HCT116 (cell line): ENCODE measurements at regions of chr6 and their contacts with region 1.

Region 1: DNA sequence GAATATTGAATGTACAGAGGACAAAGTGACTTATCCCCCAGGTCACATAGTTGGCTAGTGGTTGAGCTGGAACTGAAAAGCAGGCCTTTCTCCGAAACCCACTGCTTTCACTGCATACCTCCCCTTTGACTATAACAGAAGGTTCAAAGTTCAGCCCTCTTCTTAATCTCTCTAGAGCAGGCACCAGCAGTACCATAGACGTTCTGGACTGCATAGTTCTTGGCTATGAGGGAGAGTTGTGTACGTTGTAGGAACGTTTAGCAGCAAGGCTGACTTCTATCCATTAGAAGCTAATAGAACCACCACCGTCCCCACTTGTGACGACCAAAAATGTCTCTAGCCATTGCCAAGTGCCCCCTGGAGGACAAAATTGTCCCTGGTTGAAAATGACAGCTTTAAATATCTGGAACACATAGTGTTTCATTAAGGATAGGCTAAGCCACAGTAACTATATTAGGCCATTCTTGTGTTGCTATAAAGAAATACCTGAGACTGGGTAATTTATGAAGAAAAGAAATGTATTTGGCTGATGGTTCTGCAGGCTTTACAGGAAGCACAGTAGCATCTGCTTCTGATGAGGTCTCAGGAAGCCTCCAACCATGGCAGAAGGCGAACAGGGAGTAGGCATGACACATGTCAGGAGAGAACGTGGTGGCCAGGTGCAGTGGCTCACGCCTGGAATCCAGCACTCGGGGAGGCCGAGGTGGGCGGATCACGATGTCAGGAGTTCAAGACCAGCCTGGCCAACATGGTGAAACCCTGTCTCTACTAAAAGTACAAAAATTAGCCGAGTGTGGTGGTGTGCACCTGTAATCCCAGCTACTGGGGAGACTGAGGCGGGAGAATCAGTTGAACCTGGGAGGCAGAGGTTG is 123.6 kb upstream of the MTHFD1L start:
- DNase-seq: peak; percentile 23
- ATAC-seq: peak; percentile 73
- H3K4me3 ChIP-seq: no peak overlapping the region
- H3K27ac ChIP-seq: no peak overlapping the region
- H3K4me1 ChIP-seq: no peaks in the 10 kb centered on the region
- H3K27me3 ChIP-seq: no peaks in the 10 kb centered on the region
- CTCF ChIP-seq: peak; percentile 58 to 70 (median 66)
- POLR2A ChIP-seq: no peak
- RAD21 ChIP-seq: peak; percentile 75

Region 2: GRCh38 chr6:150417899-150418826 is 323.7 kb before region 1 on chr6:
- CTCF ChIA-PET with region 1: interaction called, 18 read pairs
- POLR2A ChIA-PET with region 1: interaction called, 3 read pairs
- RAD21 ChIA-PET with region 1: interaction called in 1 of 2 experiments, 4 read pairs
- intact Hi-C with region 1: loop called (anchors 1 kb)
- DNase-seq: peak; percentile 88
- ATAC-seq: peak; percentile 83
- H3K4me3 ChIP-seq: peak overlapping the region; percentile 13 to 50
- H3K27ac ChIP-seq: peak overlapping the region; percentile 40; the same call in 1 of the 2 replicates
- H3K4me1 ChIP-seq: peaks cover 13 to 20% of the 10 kb centered on the region in 2 experiments
- H3K27me3 ChIP-seq: no peaks in the 10 kb centered on the region
- CTCF ChIP-seq: peak; percentile 80 to 88 (median 83)
- POLR2A ChIP-seq: no peak
- RAD21 ChIP-seq: peak; percentile 96

Region 3: GRCh38 chr6:150685860-150686259 is 56.0 kb before region 1 on chr6:
- CTCF ChIA-PET with region 1: interaction called, 10 read pairs
- POLR2A ChIA-PET with region 1: no interaction called
- RAD21 ChIA-PET with region 1: no interaction called
- intact Hi-C with region 1: no loop called
- DNase-seq: peak; percentile 39
- ATAC-seq: peak; percentile 99
- H3K4me3 ChIP-seq: no peak overlapping the region
- H3K27ac ChIP-seq: no peak overlapping the region
- H3K4me1 ChIP-seq: peaks cover 0 to 10% of the 10 kb centered on the region in 2 experiments; a peak in 2 of 4 replicates
- H3K27me3 ChIP-seq: no peaks in the 10 kb centered on the region
- CTCF ChIP-seq: peak; percentile 64 to 95 (median 90); a peak in 5 of 6 replicates
- POLR2A ChIP-seq: no peak
- RAD21 ChIP-seq: peak; percentile 74

Region 4: DNA sequence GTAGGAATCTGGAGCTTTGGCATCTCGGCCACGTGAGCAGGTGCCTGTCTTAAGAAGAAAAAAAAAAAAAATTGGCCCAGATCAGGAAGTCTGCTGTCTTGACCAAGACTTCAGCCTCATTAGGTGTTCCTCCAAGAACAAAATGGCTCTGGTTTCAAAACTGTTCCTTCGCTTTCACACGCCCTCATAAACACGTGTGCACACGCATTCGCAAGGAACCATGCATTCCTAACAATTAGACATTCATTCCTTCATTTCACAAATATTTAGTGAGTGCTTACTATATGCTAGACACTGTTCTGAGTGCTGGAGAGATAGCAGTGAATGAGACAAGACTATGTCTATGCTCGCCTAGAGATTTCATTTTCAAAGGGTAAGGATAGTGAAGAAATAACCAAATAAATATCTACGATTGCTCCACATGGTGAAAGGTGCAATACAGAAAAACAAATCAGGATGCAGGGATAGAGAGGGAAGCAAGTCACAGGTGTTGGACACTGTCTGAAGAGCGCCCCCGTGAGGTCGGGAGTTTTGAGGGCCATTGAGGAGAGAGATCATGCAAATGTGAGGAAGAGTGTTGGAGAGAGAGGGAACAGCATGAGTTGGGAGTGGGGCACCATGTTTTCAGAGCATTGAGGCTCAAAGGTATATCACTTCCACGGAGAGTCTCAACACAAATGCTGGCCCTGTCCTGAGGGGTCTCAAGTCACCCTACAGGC is 805.2 kb after region 1 on chr6:
- CTCF ChIA-PET with region 1: no interaction called
- POLR2A ChIA-PET with region 1: no interaction called
- RAD21 ChIA-PET with region 1: no interaction called
- intact Hi-C with region 1: no loop called
- DNase-seq: no peak
- ATAC-seq: no peak
- H3K4me3 ChIP-seq: no peak overlapping the region
- H3K27ac ChIP-seq: no peak overlapping the region
- H3K4me1 ChIP-seq: no peaks in the 10 kb centered on the region
- H3K27me3 ChIP-seq: no peaks in the 10 kb centered on the region
- CTCF ChIP-seq: peak in 2 of 3 experiments; percentile 7 to 39; a peak in 2 of 6 replicates
- POLR2A ChIP-seq: no peak
- RAD21 ChIP-seq: no peak